HCT116 (cell line): ENCODE measurements at regions of chr6 and their contacts with region 1.

Region 1: DNA sequence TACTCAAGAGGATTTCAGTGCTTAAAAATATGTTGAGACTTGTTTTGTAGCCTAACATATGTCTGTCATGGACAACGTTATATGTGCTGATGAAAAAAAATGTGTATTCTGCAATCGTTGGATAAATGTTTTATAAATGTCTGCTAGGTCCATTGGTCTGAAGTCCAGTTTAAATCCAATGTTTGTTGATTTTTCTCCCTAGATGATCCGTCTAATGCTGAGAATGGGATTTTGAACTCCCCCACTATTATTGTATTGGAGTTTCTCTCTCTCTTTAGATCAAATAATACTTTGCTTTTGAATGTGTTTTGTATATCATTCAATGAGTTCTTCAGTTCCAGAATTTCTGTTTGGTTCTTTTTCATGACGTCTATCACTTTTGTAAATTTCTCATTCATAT is 44.9 kb downstream of the CYB5R4 start:
- DNase-seq: no peak
- ATAC-seq: no peak
- H3K4me3 ChIP-seq: no peak overlapping the region
- H3K27ac ChIP-seq: no peak overlapping the region
- H3K4me1 ChIP-seq: no peaks in the 10 kb centered on the region; a peak in 1 of 4 replicates
- H3K27me3 ChIP-seq: no peaks in the 10 kb centered on the region
- CTCF ChIP-seq: no peak
- POLR2A ChIP-seq: no peak
- RAD21 ChIP-seq: no peak

Region 2: GRCh38 chr6:83490217-83490807 is 414.1 kb before region 1 on chr6:
- CTCF ChIA-PET with region 1: no interaction called
- POLR2A ChIA-PET with region 1: no interaction called
- RAD21 ChIA-PET with region 1: no interaction called
- intact Hi-C with region 1: loop called (anchors 5 kb)
- DNase-seq: no peak
- ATAC-seq: no peak
- H3K4me3 ChIP-seq: no peak overlapping the region
- H3K27ac ChIP-seq: no peak overlapping the region
- H3K4me1 ChIP-seq: no peaks in the 10 kb centered on the region
- H3K27me3 ChIP-seq: no peaks in the 10 kb centered on the region
- CTCF ChIP-seq: no peak
- POLR2A ChIP-seq: no peak
- RAD21 ChIP-seq: no peak